GM12878 (cell line): ENCODE measurements at regions of chr21 and their contacts with region 1.

Region 1: GRCh38 chr21:34630536-34631143 is 15.7 kb upstream of the RCAN1 start:
- DNase-seq: peak; percentile 33
- ATAC-seq: peak; percentile 92
- H3K4me3 ChIP-seq: no peak overlapping the region
- H3K27ac ChIP-seq: no peak overlapping the region
- H3K4me1 ChIP-seq: no peaks in the 10 kb centered on the region
- H3K27me3 ChIP-seq: no peaks in the 10 kb centered on the region
- CTCF ChIP-seq: peak; percentile 65 to 87 (median 75)
- EP300 ChIP-seq: no peak
- POLR2A ChIP-seq: no peak
- RAD21 ChIP-seq: peak; percentile 98

Region 2: GRCh38 chr21:34362136-34362444 is 268.6 kb before region 1 on chr21:
- CTCF ChIA-PET with region 1: interaction called, 16 read pairs
- POLR2A ChIA-PET with region 1: no interaction called
- RAD21 ChIA-PET with region 1: interaction called, 3 read pairs
- SMC1A ChIA-PET with region 1: interaction called, 6 read pairs
- in situ Hi-C with region 1: no loop called
- intact Hi-C with region 1: no loop called
- DNase-seq: no peak
- ATAC-seq: peak; percentile 24; the same call in 2 of the 3 replicates
- H3K4me3 ChIP-seq: no peak overlapping the region
- H3K27ac ChIP-seq: no peak overlapping the region
- H3K4me1 ChIP-seq: no peaks in the 10 kb centered on the region
- H3K27me3 ChIP-seq: peaks cover 0 to 3% of the 10 kb centered on the region in 2 experiments; a peak in 1 of 4 replicates
- CTCF ChIP-seq: no peak
- EP300 ChIP-seq: no peak
- POLR2A ChIP-seq: no peak
- RAD21 ChIP-seq: no peak

Region 3: DNA sequence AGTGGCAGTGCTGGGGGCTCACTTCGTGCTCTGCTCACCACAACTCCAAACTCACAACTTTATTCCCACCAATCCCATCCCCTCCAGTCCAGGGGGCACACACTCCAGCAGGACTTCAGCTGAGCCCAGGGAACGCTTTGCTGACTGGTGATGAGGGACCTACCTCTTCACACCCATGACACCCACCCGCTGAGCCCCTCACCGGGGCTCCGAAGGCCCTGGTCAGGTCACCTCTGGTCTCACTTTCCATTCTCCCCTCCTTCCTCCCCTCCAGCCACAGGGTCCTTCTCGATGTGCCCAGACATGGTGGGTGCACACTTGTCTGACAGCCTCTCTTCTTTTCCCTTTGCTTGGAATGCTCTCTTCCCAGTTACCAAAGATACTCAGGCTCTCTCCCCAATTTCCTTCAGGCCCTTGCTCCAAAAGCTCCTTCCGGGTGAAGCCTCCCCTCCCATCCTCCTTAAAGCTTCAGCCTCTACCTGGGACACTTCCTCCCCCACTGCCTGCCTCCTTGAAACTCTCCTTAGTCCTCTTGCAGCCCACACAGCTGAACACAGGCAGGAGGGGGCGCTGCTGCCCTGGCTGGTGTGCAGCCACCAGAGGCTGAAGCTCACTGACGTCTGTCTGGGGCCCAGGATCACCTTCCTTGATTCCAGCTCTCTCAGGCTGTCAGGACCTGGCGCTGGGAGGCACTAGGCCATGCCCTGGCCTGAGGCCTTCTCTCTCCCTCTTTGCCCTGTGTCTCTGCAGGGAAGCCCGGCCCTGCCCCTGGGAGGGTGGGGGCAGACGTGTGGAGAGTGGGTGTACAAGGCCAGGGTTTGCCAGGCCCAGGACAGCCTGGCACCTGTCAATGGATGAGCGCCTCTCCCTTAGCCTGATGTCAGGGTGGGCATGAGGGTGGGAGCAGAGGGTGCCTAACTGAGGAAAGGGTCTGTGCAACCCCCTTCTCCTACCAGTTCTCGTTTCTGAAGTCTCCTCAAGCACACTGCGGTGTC is 120.2 kb before region 1 on chr21:
- CTCF ChIA-PET with region 1: interaction called, 20 read pairs
- POLR2A ChIA-PET with region 1: no interaction called
- RAD21 ChIA-PET with region 1: interaction called, 14 read pairs
- SMC1A ChIA-PET with region 1: interaction called, 23 read pairs
- in situ Hi-C with region 1: no loop called
- intact Hi-C with region 1: loop called (anchors 1 kb)
- DNase-seq: no peak
- ATAC-seq: peak; percentile 99
- H3K4me3 ChIP-seq: no peak overlapping the region
- H3K27ac ChIP-seq: no peak overlapping the region
- H3K4me1 ChIP-seq: no peaks in the 10 kb centered on the region
- H3K27me3 ChIP-seq: no peaks in the 10 kb centered on the region
- CTCF ChIP-seq: peak; percentile 81 to 86 (median 86)
- EP300 ChIP-seq: no peak
- POLR2A ChIP-seq: no peak
- RAD21 ChIP-seq: peak; percentile 98

Region 4: DNA sequence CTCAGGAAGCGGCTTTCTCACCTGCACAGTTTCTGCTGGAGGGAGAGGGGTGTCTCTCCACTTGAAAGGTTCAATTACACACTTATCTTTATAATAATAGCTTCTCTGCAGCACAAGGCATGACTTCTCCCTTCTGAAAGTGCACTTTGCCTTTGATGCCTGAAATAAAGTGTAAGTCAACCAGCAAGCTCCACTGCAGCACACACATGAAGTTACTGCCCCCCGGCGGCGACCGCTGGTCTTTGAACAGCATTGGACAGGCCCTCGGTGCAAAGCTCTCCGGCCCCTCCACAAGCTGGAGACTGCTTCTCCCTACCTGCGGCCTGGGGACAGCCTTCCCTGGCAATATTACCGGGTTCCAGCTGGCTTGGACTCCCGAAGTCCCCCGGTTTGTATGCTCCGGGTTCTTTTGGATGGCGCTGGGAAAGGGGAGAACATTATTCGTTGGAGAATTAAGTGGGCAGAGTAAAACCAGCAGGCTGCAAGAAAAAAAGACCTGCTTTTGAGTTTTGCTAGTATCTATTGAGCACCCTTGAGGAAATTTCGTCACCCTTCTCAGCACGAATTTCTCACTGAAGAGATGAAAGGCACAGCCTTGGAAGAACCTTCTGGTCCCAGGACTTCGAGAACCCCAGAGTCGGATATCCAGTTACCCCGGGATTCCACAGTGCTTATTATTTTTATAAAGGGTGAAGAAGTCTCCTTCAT is 27.5 kb before region 1 on chr21:
- CTCF ChIA-PET with region 1: interaction called, 59 read pairs
- POLR2A ChIA-PET with region 1: no interaction called
- RAD21 ChIA-PET with region 1: interaction called, 10 read pairs
- SMC1A ChIA-PET with region 1: interaction called, 19 read pairs
- in situ Hi-C with region 1: no loop called
- intact Hi-C with region 1: loop called (anchors 2 kb)
- DNase-seq: no peak
- ATAC-seq: peak; percentile 100
- H3K4me3 ChIP-seq: no peak overlapping the region
- H3K27ac ChIP-seq: no peak overlapping the region
- H3K4me1 ChIP-seq: no peaks in the 10 kb centered on the region
- H3K27me3 ChIP-seq: no peaks in the 10 kb centered on the region
- CTCF ChIP-seq: peak; percentile 81 to 85 (median 83)
- EP300 ChIP-seq: no peak
- POLR2A ChIP-seq: no peak
- RAD21 ChIP-seq: peak; percentile 99

Region 5: GRCh38 chr21:34614633-34615486 is 15.8 kb before region 1 on chr21 and contains the start of gene RCAN1:
- CTCF ChIA-PET with region 1: interaction called, 30 read pairs
- POLR2A ChIA-PET with region 1: interaction called, 3 read pairs
- RAD21 ChIA-PET with region 1: interaction called, 12 read pairs
- SMC1A ChIA-PET with region 1: interaction called, 24 read pairs
- in situ Hi-C with region 1: no loop called
- intact Hi-C with region 1: no loop called
- DNase-seq: peak; percentile 75
- ATAC-seq: peak; percentile 98
- H3K4me3 ChIP-seq: peak within 1 kb of the TSS; percentile 81
- H3K27ac ChIP-seq: no peak within 1 kb of the TSS
- H3K4me1 ChIP-seq: peaks cover 6% of the 10 kb centered on the region
- H3K27me3 ChIP-seq: no peaks in the 10 kb centered on the region
- CTCF ChIP-seq: no peak
- EP300 ChIP-seq: no peak
- POLR2A ChIP-seq: 0 out of 2 replicates have a peak, but pooled peaks have one; percentile 1
- RAD21 ChIP-seq: no peak
- polyA plus RNA-seq, gene RCAN1: 5.1 to 8.8 TPM

Region 6: DNA sequence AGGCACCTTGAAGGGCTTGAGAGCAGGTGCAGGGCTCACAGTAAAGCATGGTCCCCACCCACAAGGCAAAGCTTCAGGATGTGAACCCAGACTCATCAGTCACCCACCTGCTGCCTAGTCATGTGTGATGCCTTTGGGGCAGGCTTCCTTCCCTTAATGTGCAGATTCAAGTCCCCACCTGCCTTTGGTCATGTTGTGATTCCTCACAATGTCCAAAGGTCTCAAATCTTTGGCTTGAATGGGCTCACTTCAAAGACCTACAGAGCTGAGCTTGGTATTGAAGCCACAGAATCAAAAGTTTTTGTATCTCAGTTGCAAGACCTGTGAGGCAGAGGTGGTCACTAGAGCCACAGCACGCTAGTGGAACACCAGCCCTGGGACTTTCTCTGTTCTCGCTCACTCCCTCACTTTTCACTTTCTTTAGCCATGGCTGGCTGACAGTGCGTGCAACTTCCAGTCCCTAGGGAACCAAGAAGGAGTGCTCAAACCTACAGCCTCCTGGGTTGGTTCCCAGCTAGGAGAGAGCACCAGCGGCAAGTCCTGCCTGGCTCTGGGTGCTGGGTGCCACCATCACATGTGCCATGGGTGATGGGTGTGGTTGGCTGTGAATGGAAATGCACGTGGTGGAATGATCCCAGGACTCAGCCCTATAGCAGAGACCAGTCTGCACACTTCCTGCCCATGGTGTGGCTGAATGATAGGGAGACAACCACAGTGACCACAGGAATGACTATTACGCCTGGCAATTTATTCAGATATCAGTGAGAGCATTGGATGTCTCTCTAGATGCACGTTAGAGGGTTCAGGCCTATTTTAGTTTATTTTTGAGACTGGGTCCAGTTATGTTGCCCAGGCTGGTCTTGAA is 11.8 kb after region 1 on chr21:
- CTCF ChIA-PET with region 1: interaction called, 15 read pairs
- POLR2A ChIA-PET with region 1: no interaction called
- RAD21 ChIA-PET with region 1: interaction called, 3 read pairs
- SMC1A ChIA-PET with region 1: interaction called, 3 read pairs
- in situ Hi-C with region 1: no loop called
- intact Hi-C with region 1: no loop called
- DNase-seq: peak; percentile 87
- ATAC-seq: peak; percentile 77
- H3K4me3 ChIP-seq: 0 out of 2 replicates have a peak overlapping the region, but pooled peaks have one; percentile 6
- H3K27ac ChIP-seq: peak overlapping the region; percentile 97
- H3K4me1 ChIP-seq: peaks cover 60% of the 10 kb centered on the region
- H3K27me3 ChIP-seq: no peaks in the 10 kb centered on the region
- CTCF ChIP-seq: no peak
- EP300 ChIP-seq: peak in 1 of 2 experiments; percentile 65; a peak in 2 of 4 replicates
- POLR2A ChIP-seq: no peak; the same call in 1 of the 2 replicates
- RAD21 ChIP-seq: no peak

Region 7: GRCh38 chr21:34675171-34675570 is 44.5 kb after region 1 on chr21:
- CTCF ChIA-PET with region 1: interaction called, 15 read pairs
- POLR2A ChIA-PET with region 1: no interaction called
- RAD21 ChIA-PET with region 1: interaction called, 6 read pairs
- SMC1A ChIA-PET with region 1: interaction called, 11 read pairs
- in situ Hi-C with region 1: no loop called
- intact Hi-C with region 1: no loop called
- DNase-seq: no peak
- ATAC-seq: peak; percentile 10; the same call in 2 of the 3 replicates
- H3K4me3 ChIP-seq: no peak overlapping the region
- H3K27ac ChIP-seq: peak overlapping the region; percentile 81
- H3K4me1 ChIP-seq: peaks cover 29% of the 10 kb centered on the region
- H3K27me3 ChIP-seq: no peaks in the 10 kb centered on the region
- CTCF ChIP-seq: no peak
- EP300 ChIP-seq: no peak
- POLR2A ChIP-seq: no peak
- RAD21 ChIP-seq: no peak